ENCODE measurements at regions of chr5 and their contacts with region 1.

Region 1: GRCh38 chr5:103232393-103232999 is 26.1 kb upstream of the MACIR start:
- DNase-seq: peak; percentile 53

Region 2: DNA sequence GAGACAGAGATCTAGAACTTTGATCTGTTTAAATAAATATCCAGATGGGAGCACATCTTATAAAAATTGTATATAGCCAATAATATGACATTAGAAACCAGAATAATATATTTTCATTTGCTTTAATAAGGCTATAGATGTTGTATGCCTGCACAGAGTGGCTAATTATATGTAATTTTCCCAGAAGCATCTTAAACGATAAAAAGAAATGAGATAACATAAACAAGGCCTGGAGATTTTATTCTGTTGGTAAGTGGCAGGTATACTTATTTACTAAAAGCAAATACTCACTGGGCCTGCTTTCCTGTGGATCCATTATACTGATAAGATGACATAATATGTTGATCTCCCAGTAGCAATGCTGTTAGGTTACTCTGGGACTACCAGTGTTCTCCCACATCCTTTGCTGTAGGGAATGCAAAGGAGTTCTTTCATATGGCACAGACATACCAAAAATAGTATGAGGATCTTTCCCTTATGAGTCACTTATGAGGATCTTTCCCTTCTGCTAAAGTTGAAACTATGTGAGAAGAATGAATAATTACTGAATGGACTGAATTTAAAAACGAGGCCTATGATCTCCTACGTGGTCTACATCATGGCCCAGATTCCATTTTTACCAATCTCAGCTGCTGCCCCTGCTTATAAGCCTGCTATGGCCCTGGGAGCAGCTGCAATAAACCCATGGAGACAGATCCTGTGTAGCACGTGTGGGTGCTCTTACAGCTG is 218.0 kb after region 1 on chr5:
- in situ Hi-C with region 1: loop called (anchors 25 kb)
- DNase-seq: no peak

Region 3: DNA sequence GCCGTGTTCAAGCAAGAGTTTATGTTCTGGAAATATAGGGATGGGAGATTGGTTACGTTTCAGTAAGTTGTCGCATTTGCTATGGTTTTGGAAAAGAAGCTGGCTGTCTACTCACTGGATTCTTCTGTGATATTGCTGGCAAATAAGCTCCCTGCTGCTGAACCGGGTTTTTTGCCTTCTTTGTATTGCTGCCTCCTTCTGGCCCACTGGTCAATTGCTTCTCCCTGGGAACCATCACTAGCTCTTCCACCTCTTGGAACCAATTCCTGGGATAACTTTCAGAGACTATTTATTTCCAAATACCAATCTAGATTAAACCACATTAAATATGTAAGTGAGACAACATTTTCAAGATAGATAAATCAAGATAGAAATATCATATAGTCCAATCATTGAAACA is 287.1 kb after region 1 on chr5:
- in situ Hi-C with region 1: no loop called
- DNase-seq: peak; percentile 11

Region 4: DNA sequence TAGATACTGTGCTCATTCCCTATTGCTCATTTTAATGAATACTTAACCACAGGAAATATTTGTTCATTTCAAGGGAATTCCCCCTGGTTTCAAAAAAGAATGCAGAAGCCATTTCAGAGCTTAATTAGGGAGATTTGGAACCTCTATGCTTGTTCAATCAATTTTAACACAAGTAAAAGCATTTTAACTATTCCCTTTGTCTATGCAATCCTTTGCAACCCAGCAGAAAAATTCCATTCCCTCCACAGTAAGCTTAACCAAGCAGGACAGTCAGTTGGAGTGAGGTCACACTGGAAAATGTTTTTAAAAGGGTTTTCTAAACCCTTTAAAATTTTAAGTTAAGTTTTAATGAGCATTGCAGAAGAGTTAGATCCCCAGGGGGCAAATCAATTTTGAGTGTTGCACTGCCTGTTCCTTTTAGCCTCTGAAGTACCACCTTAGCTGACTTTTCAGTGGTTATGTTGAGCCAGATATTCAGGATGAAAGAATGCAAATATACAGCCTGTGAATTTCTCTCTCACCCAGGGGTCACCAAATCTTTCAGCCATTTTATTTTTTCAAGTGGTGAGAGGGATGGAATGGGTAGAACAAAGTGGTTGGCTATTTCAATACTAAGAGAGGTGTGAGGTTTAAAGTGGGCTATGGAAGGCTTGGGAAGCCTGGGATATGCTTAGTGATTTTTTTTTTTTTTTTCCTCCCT is 686.3 kb after region 1 on chr5:
- in situ Hi-C with region 1: no loop called
- DNase-seq: no peak

Measured in KBM-7 (cell line).